Testis (tissue), 5 donors: ENCODE measurements at regions of chr9 and their contacts with region 1.

Region 1: GRCh38 chr9:134178768-134179551 is 14.6 kb upstream of the RNU6ATAC start:
- DNase-seq: peak; percentile 89
- H3K4me3 ChIP-seq: no peak overlapping the region
- H3K27ac ChIP-seq: no peak overlapping the region
- H3K4me1 ChIP-seq: peaks cover 26% of the 10 kb centered on the region
- H3K27me3 ChIP-seq: no peaks in the 10 kb centered on the region
- CTCF ChIP-seq: no peak
- POLR2A ChIP-seq: no peak

Region 2: GRCh38 chr9:133916159-133916541 is 262.8 kb before region 1 on chr9:
- intact Hi-C with region 1: no loop called
- DNase-seq: no peak
- H3K4me3 ChIP-seq: no peak overlapping the region
- H3K27ac ChIP-seq: no peak overlapping the region
- H3K4me1 ChIP-seq: no peaks in the 10 kb centered on the region
- H3K27me3 ChIP-seq: no peaks in the 10 kb centered on the region
- CTCF ChIP-seq: no peak
- POLR2A ChIP-seq: no peak

Region 3: DNA sequence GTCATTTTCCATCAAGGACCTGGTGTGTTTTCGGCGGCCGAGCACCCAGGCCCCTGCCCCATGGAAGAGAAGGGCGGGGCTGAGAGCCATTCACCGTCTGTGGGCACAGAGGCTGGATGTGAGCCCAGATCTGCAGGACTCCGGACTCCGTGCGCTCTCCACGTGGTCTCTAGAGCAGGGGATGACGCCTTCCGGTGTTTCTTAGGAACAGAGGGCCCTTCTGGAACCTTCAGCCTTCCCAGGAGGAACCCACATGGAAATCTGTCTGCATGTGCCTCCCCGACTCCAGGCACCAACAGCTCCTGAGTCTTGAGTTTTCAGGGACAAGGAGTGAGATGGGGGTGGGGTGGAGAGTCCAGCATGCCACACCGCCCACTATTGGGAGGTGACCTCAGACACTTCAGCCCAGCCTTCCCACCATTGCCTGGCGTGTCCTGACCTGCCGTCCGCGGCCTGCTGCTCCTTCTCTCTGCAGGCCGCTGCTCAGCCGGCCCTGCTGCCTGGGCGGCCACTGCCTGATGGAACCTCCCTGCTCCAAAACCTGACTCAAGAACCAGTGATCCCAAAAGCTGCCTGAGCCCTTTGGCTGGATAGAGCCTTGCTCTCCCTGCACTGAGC is 144.9 kb after region 1 on chr9:
- intact Hi-C with region 1: loop called (anchors 5 kb)
- DNase-seq: peak; percentile 67
- H3K4me3 ChIP-seq: no peak overlapping the region
- H3K27ac ChIP-seq: peak overlapping the region; percentile 9 to 64
- H3K4me1 ChIP-seq: peaks cover 34% of the 10 kb centered on the region
- H3K27me3 ChIP-seq: no peaks in the 10 kb centered on the region
- CTCF ChIP-seq: no peak
- POLR2A ChIP-seq: no peak